ACHN (cell line): ENCODE measurements at regions of chr10 and their contacts with region 1.

Region 1: DNA sequence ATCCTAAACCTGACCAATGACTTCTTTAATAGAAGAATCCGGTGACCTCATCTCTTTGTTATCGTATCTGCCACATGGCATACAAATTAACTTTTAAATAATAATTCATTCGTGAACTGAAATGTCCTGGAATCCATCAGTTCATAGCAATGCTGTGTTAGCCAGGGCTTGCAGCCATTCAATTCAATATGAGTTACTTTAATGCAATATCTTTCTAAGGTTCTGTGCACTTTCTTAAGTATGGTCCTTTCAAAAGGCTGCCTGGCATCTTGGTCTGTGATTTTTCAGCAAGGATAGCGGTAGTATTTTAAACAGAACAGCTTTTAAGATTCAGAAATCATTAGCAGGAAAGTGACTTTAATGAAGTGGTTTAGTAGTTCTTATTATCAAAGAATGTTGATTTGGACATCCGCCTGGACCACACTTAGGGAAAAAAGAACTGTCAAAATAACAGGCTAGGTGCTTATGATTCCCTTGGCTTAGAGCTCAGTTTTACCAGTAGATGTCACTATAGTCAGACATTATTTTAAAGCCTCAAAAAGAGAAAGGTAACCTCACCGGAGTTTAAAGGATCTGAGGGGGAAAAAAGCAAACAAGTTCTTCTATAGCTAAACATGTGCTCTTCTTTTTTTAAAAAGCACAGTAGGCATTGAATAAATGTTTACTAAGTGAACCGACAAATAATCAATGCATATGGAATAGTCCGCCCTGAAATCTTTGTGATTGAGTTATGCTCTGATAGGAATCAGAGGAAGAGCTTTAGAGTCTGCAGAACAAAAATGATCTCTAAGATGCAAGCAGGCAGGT is 22.7 kb downstream of the SLC35G1 start:
- DNase-seq: peak; percentile 69

Region 2: DNA sequence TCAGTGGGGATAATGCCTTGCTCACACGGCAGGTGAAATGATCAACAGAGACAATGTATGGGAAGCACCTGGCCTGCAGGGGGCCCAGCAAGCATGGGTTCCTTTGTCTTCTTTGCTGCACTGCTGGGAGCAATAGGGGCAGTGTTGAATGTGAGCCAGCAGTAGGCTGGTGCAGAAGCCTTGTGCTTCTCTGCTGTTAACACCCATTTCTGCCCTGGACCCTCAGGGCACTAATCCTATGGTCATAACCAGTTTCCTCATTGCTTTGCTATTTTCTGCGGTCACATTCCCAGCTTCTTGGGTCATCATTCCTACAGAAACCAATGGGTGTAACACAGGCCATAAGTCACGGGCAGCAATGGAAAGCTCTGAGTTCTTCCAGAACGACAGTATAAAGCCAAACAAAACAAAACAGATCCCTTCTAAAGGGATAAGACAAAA is 169.6 kb before region 1 on chr10:
- in situ Hi-C with region 1: no loop called
- DNase-seq: peak; percentile 28

Region 3: GRCh38 chr10:94320285-94320914 is 403.9 kb after region 1 on chr10:
- in situ Hi-C with region 1: loop called (anchors 25 kb)
- DNase-seq: peak; percentile 68